ENCODE measurements at regions of chr10 and their contacts with region 1.

Region 1: GRCh38 chr10:104308439-104308903 is 29.8 kb downstream of the ITPRIP start:
- H3K4me3 ChIP-seq: no peak overlapping the region
- H3K27ac ChIP-seq: no peak overlapping the region
- H3K4me1 ChIP-seq: no peaks in the 10 kb centered on the region
- CTCF ChIP-seq: no peak

Region 2: GRCh38 chr10:104322416-104322782 is 13.9 kb after region 1 on chr10:
- CTCF ChIA-PET with region 1: interaction called, 21 read pairs
- POLR2A ChIA-PET with region 1: no interaction called
- H3K4me3 ChIP-seq: no peak overlapping the region
- H3K27ac ChIP-seq: no peak overlapping the region
- H3K4me1 ChIP-seq: peaks cover 2% of the 10 kb centered on the region; the same call in 1 of the 2 replicates
- CTCF ChIP-seq: no peak

Region 3: GRCh38 chr10:104328896-104329710 is 20.6 kb after region 1 on chr10:
- CTCF ChIA-PET with region 1: interaction called, 13 read pairs
- POLR2A ChIA-PET with region 1: no interaction called
- H3K4me3 ChIP-seq: no peak overlapping the region
- H3K27ac ChIP-seq: peak overlapping the region; percentile 55; the same call in 1 of the 2 replicates
- H3K4me1 ChIP-seq: peaks cover 40% of the 10 kb centered on the region
- CTCF ChIP-seq: no peak

Region 4: DNA sequence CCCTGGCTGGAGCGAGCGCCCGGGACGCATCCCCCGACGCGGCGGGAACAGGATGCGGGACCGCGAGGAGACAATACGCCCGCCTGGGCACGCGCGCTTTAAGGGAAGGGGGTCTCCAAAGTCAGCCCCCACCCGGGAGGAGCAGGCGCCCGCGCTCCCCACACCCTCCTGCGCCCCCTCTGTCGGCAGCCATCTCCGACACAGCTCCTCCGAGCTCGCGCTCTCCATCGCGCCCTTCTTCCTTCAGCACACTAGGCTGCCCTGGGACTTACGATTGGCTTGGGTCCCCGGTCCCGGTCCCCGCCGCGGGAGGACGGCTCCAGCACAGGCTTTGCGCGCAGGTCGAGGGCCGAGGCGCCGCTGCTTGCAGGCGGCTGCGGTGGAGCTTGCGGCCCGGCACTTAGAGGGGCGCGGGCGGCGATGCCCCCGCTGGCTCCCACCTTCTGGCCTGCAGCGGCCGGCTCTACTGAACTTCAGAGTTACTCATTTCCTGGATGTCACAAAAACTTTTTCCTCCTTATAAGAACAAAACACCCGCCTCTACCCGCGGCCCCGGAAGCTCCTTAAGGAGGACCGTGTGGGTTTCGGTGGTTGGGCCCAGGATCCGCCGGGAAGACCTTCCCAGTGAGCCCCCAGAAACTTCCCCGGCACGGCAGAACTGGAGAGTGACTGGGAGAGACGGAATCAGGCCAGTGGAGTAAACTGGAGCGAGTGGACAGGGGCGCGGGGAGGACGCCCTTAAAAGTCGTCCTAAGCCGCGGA is 29.7 kb after region 1 on chr10 and contains the start of gene ITPRIP:
- CTCF ChIA-PET with region 1: interaction called, 12 read pairs
- POLR2A ChIA-PET with region 1: interaction called, 8 read pairs
- H3K4me3 ChIP-seq: peak within 1 kb of the TSS; percentile 84
- H3K27ac ChIP-seq: peak within 1 kb of the TSS; percentile 98
- H3K4me1 ChIP-seq: peaks cover 15% of the 10 kb centered on the region
- CTCF ChIP-seq: peak; percentile 92

Region 5: DNA sequence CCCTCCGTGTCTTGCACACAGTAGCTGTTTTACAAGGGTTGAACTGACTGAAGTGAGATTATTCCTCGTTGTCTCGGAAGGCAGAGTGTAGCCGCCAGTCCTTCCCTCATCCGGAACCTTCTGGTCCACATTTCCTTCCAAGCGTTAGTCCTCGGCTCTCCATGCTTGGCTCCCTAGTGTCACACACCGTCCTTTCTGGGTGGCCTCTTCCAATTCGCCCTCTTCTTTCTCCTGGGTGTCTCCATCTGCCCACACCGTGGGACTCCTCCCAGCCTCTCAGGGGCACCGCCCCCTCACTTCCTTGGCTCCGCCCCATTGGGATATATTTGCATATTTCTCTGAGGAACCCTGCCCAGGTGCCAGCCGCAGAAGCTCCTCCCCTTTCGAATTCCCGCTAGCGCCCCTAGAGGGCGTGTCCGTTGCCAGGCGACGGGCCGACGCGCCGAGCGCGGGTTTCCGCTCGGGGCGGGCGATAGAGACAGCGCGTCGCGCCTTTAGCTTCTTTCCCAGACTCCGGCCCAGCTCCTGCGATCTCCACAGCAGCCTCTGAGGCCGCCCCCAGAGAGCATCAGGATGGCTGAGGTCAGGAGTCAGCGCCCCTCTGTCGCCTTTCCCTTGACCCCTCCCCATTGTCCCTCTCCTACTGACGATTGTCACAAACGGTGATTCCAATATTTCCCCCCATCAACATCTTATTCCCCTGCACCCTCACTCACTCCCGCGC is 45.0 kb after region 1 on chr10 and contains the start of gene CFAP58:
- CTCF ChIA-PET with region 1: interaction called, 152 read pairs
- POLR2A ChIA-PET with region 1: no interaction called
- H3K4me3 ChIP-seq: peak within 1 kb of the TSS; percentile 45
- H3K27ac ChIP-seq: no peak within 1 kb of the TSS
- H3K4me1 ChIP-seq: peaks cover 4% of the 10 kb centered on the region; the same call in 1 of the 2 replicates
- CTCF ChIP-seq: peak; percentile 85

Measured in HEK293 (cell line).